ENCODE measurements at regions of chr10 and their contacts with region 1.

Region 1: DNA sequence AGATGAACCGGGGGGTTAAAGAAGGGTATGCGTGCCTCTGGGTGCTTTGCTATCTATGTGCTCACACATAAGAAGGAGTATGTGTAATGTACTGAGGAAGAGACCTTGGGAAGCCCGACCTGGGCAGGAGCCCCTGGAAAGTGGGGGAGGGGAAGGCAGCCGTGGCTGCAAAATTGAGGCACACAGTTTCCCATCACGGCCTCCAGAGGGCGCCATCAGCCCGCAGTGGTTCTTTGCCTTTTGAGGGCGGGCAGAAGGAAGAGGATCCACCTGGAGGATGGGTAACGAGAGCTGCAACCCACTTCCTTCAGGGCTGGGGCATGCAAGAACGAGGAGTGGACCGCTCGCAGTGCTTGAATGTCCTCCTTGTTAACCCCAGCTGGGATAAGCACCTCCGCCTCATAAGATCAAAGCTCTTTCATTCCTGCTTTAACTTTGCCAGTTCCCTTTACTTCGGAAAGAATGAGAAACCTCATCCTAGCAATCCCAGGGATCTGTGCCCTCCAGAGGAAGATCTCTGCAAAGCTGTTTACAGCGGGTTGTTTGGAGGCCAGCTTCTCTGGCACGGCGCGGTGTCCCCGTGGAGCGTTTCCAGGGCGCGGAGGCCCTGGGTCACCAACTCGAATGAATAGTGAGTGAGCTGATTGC is 77.9 kb downstream of the PCGF5 start:
- DNase-seq: peak; percentile 85
- H3K4me3 Mint-ChIP-seq: peak overlapping the region; percentile 63
- H3K27ac Mint-ChIP-seq: peak overlapping the region; percentile 46
- H3K4me1 Mint-ChIP-seq: peaks cover 17% of the 10 kb centered on the region
- H3K27me3 Mint-ChIP-seq: peaks cover 20% of the 10 kb centered on the region

Region 2: GRCh38 chr10:91287276-91287675 is 11.1 kb before region 1 on chr10:
- CTCF ChIA-PET with region 1: interaction called, 16 read pairs
- POLR2A ChIA-PET with region 1: no interaction called
- DNase-seq: no peak
- H3K4me3 Mint-ChIP-seq: no peak overlapping the region
- H3K27ac Mint-ChIP-seq: no peak overlapping the region
- H3K4me1 Mint-ChIP-seq: no peaks in the 10 kb centered on the region
- H3K27me3 Mint-ChIP-seq: no peaks in the 10 kb centered on the region

Region 3: GRCh38 chr10:91313796-91314485 is 15.6 kb after region 1 on chr10:
- CTCF ChIA-PET with region 1: interaction called, 14 read pairs
- POLR2A ChIA-PET with region 1: no interaction called
- DNase-seq: no peak
- H3K4me3 Mint-ChIP-seq: no peak overlapping the region
- H3K27ac Mint-ChIP-seq: no peak overlapping the region
- H3K4me1 Mint-ChIP-seq: no peaks in the 10 kb centered on the region
- H3K27me3 Mint-ChIP-seq: peaks cover 9% of the 10 kb centered on the region

Region 4: GRCh38 chr10:91635401-91636400 is 337.4 kb after region 1 on chr10:
- CTCF ChIA-PET with region 1: interaction called, 18 read pairs
- POLR2A ChIA-PET with region 1: no interaction called
- DNase-seq: peak; percentile 70
- H3K4me3 Mint-ChIP-seq: no peak overlapping the region
- H3K27ac Mint-ChIP-seq: no peak overlapping the region
- H3K4me1 Mint-ChIP-seq: peaks cover 10% of the 10 kb centered on the region
- H3K27me3 Mint-ChIP-seq: peaks cover 49% of the 10 kb centered on the region